Activated CD8-positive, alpha-beta T cell treated with anti-CD3 and anti-CD28 coated beads for 36 hours (primary cell): ENCODE measurements at regions of chr21 and their contacts with region 1.

Region 1: DNA sequence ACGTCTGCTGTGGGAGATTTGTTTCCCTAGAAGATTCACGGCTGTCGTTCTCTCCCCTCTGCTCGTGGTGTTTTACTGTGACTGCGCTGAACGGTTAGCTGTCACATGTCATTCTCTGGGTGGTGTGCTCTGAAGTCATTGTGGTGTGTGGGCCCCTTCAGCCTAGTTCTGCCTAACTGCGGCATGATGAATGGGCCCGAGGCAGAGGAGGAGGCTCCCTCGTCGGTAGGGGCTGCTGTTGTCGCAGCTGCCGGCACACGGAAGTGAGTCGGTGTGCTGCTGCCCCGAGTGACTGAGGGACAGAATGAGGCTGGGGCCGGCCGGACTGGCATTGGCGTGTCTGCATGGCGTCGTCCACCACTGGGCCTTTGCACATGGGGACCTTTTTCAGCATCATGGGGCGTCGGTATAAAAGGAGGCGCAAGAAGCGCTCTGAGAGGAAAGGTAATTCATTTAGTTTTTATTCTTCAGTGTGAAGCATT is 77.9 kb downstream of the ADARB1 start:
- DNase-seq: peak; percentile 90
- ATAC-seq: peak; percentile 98
- H3K4me3 Mint-ChIP-seq: peak overlapping the region; percentile 68
- H3K27ac Mint-ChIP-seq: peak overlapping the region; percentile 84
- H3K4me1 Mint-ChIP-seq: peaks cover 35% of the 10 kb centered on the region
- H3K27me3 Mint-ChIP-seq: no peaks in the 10 kb centered on the region
- CTCF ChIP-seq: peak; percentile 56

Region 2: DNA sequence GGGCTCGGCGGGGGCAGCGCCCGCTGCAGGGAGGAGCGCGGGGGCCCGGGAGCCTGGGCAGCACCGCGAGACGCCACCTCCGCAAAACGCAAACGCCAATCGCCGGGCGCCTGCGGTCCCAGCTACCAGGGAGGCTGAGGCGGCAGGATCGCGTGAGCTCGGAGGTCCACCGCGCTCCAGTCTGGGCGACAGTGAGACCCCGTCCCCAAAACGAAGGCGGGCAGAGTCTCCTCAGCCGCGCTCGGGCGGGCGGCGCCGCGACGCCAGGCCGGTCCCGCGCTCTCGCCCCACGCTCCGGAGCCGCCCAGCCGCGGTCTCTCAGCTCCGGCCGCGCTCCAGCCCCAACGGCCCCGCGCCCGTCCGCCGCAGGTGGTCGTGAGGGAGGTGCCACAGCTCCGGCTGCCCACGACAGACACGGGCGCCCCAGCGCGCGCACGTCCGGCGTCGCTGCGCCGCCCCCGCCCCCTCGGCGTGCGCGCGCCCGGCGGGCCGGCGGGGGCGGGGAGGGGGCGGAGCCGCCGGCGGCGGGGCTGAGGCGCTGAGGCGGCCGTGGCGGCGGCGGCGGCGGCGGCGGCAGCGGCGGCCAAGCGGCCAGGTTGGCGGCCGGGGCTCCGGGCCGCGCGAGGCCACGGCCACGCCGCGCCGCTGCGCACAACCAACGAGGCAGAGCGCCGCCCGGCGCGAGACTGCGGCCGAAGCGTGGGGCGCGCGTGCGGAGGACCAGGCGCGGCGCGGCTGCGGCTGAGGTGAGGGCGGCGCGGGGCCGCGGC is 78.1 kb before region 1 on chr21 and contains the start of gene ADARB1:
- CTCF ChIA-PET with region 1: no interaction called
- POLR2A ChIA-PET with region 1: no interaction called
- intact Hi-C with region 1: no loop called
- DNase-seq: peak; percentile 56
- ATAC-seq: peak; percentile 40
- H3K4me3 Mint-ChIP-seq: peak within 1 kb of the TSS; percentile 87
- H3K27ac Mint-ChIP-seq: peak within 1 kb of the TSS; percentile 87
- H3K4me1 Mint-ChIP-seq: peaks cover 39% of the 10 kb centered on the region
- H3K27me3 Mint-ChIP-seq: no peaks in the 10 kb centered on the region
- CTCF ChIP-seq: no peak
- total RNA-seq, gene ADARB1: 36.2 to 37.1 TPM

Region 3: DNA sequence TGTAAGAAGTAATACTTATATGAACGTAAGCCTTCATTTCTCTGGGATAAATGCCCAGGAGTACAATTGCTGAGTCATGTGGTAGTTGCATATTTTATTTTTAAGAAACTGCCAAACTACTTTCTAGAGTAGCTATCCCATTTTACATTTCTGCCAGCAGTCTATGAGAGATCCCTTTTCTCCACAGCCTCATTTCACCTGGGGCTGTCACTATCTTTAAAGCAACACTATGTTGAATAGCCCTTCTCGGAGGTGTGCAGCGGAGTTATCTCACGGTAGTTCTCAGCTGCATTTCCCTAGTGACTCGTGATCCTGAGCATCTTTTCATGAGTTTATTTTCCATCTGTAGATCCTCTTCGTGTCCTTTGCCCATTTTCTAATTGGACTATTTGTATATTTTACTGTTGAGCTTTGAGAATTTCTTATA is 15.5 kb after region 1 on chr21:
- CTCF ChIA-PET with region 1: interaction called, 19 read pairs
- POLR2A ChIA-PET with region 1: no interaction called
- intact Hi-C with region 1: no loop called
- DNase-seq: no peak
- ATAC-seq: no peak
- H3K4me3 Mint-ChIP-seq: no peak overlapping the region
- H3K27ac Mint-ChIP-seq: no peak overlapping the region
- H3K4me1 Mint-ChIP-seq: peaks cover 20% of the 10 kb centered on the region
- H3K27me3 Mint-ChIP-seq: no peaks in the 10 kb centered on the region
- CTCF ChIP-seq: no peak

Region 4: GRCh38 chr21:45277101-45278045 is 125.1 kb after region 1 on chr21:
- CTCF ChIA-PET with region 1: no interaction called
- POLR2A ChIA-PET with region 1: no interaction called
- intact Hi-C with region 1: no loop called
- DNase-seq: no peak
- ATAC-seq: no peak
- H3K4me3 Mint-ChIP-seq: no peak overlapping the region
- H3K27ac Mint-ChIP-seq: no peak overlapping the region
- H3K4me1 Mint-ChIP-seq: no peaks in the 10 kb centered on the region
- H3K27me3 Mint-ChIP-seq: no peaks in the 10 kb centered on the region
- CTCF ChIP-seq: no peak

Region 5: DNA sequence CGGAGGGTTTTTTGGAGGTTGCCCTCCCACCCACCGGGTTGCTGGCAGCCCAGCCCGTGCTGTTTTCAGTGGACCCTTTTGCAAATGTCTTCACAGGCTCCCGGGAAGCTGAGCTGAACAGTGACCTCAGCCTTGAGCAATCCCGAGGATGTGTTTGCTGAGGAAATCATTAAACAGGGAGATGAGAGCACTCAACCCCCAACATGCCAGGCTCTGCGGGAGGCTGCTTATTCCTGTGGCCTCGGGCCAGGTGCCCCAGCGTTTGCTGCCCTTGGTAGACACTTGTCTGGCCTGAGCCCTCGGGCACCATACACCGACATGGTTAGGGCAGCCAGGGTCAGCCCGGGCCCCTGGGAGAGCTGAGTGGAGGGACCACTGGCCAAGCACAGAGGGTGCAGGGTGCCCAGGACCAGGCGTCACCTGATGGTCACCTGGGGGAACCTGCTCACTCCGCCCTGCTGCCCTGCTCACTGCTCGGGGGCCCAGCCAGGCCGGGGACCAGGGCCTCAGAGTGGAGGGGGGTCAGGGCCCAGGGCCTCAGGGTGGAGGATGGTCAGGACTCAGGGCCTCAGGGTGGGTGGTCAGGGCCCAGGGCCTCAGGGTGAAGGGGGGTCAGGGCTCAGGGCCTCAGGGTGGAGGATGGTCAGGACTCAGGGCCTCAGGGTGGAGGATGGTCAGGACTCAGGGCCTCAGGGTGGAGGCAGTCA is 177.9 kb after region 1 on chr21:
- CTCF ChIA-PET with region 1: no interaction called
- POLR2A ChIA-PET with region 1: no interaction called
- intact Hi-C with region 1: no loop called
- DNase-seq: no peak
- ATAC-seq: no peak
- H3K4me3 Mint-ChIP-seq: no peak overlapping the region
- H3K27ac Mint-ChIP-seq: no peak overlapping the region
- H3K4me1 Mint-ChIP-seq: no peaks in the 10 kb centered on the region
- H3K27me3 Mint-ChIP-seq: no peaks in the 10 kb centered on the region
- CTCF ChIP-seq: no peak

Region 6: GRCh38 chr21:45439161-45439872 is 287.0 kb after region 1 on chr21:
- CTCF ChIA-PET with region 1: no interaction called
- POLR2A ChIA-PET with region 1: no interaction called
- intact Hi-C with region 1: loop called (anchors 10 kb)
- DNase-seq: peak; percentile 89
- ATAC-seq: peak; percentile 90
- H3K4me3 Mint-ChIP-seq: peak overlapping the region; percentile 49
- H3K27ac Mint-ChIP-seq: peak overlapping the region; percentile 5
- H3K4me1 Mint-ChIP-seq: no peaks in the 10 kb centered on the region
- H3K27me3 Mint-ChIP-seq: peaks cover 2% of the 10 kb centered on the region
- CTCF ChIP-seq: peak; percentile 95